CD4-positive, alpha-beta T cell (primary cell): ENCODE measurements at regions of chr18 and their contacts with region 1.

Region 1: GRCh38 chr18:77054606-77055428 is 77.8 kb downstream of the MBP start:
- DNase-seq: peak; percentile 64 to 93 (median 78)
- ATAC-seq: peak; percentile 79
- H3K4me3 ChIP-seq: peak overlapping the region; percentile 47
- H3K4me3 Mint-ChIP-seq: peak overlapping the region; percentile 61
- H3K27ac ChIP-seq: peak overlapping the region; percentile 90 to 92
- H3K27ac Mint-ChIP-seq: peak overlapping the region; percentile 89
- H3K4me1 ChIP-seq: peaks cover 81% of the 10 kb centered on the region
- H3K4me1 Mint-ChIP-seq: peaks cover 69% of the 10 kb centered on the region
- H3K27me3 ChIP-seq: no peaks in the 10 kb centered on the region
- H3K27me3 Mint-ChIP-seq: no peaks in the 10 kb centered on the region
- CTCF ChIP-seq: peak; percentile 79

Region 2: DNA sequence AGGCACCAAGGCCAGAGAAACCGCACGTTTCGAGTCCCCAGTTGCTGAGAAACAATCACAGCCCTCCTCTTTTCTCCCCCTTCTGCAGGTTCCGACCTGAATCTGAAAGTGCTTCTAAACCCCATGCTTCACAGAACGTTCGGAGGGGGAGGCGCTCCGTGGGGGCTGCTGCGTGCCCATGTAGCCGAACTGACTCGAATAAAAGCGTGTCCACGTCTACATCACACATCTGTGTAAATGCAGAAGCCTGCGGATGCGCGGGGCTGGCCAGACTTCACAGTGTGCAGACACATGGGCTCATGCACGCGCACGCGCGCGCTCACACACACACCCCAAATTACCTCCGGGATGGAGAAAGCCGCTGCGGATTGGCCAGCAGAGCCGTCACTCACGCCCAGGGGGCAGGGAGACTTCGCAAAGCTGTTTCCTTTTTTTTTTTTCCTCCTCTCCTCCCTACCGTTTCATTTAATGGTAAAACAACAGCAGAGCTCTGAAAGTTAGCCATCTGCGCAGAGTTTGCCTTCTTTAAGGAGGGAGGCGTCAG is 562.1 kb before region 1 on chr18:
- CTCF ChIA-PET with region 1: no interaction called
- POLR2A ChIA-PET with region 1: no interaction called
- intact Hi-C with region 1: no loop called
- DNase-seq: peak; percentile 96 to 100 (median 98)
- ATAC-seq: peak; percentile 68
- H3K4me3 ChIP-seq: peak overlapping the region; percentile 60
- H3K4me3 Mint-ChIP-seq: peak overlapping the region; percentile 95
- H3K27ac ChIP-seq: peak overlapping the region in 1 of 2 donors; percentile 37
- H3K27ac Mint-ChIP-seq: peak overlapping the region; percentile 82
- H3K4me1 ChIP-seq: peaks cover 36% of the 10 kb centered on the region
- H3K4me1 Mint-ChIP-seq: peaks cover 65% of the 10 kb centered on the region
- H3K27me3 ChIP-seq: peaks cover 13 to 24% of the 10 kb centered on the region in 2 experiments
- H3K27me3 Mint-ChIP-seq: peaks cover 82% of the 10 kb centered on the region
- CTCF ChIP-seq: no peak

Region 3: GRCh38 chr18:76765649-76766048 is 289.2 kb before region 1 on chr18:
- CTCF ChIA-PET with region 1: no interaction called
- POLR2A ChIA-PET with region 1: no interaction called
- intact Hi-C with region 1: no loop called
- DNase-seq: no peak
- ATAC-seq: no peak
- H3K4me3 ChIP-seq: no peak overlapping the region
- H3K4me3 Mint-ChIP-seq: no peak overlapping the region
- H3K27ac ChIP-seq: no peak overlapping the region
- H3K27ac Mint-ChIP-seq: no peak overlapping the region
- H3K4me1 ChIP-seq: peaks cover 13% of the 10 kb centered on the region
- H3K4me1 Mint-ChIP-seq: peaks cover 19% of the 10 kb centered on the region
- H3K27me3 ChIP-seq: peaks cover 0 to 4% of the 10 kb centered on the region in 2 experiments
- H3K27me3 Mint-ChIP-seq: peaks cover 5% of the 10 kb centered on the region
- CTCF ChIP-seq: no peak

Region 4: GRCh38 chr18:76822510-76823160 is 232.2 kb before region 1 on chr18 and contains the start of gene ZNF236:
- CTCF ChIA-PET with region 1: no interaction called
- POLR2A ChIA-PET with region 1: no interaction called
- intact Hi-C with region 1: loop called in 1 of 2 experiments (anchors 10 kb)
- DNase-seq: peak; percentile 39 to 88 (median 62)
- ATAC-seq: peak; percentile 43
- H3K4me3 ChIP-seq: peak within 1 kb of the TSS; percentile 97
- H3K4me3 Mint-ChIP-seq: peak within 1 kb of the TSS; percentile 96
- H3K27ac ChIP-seq: peak within 1 kb of the TSS; percentile 90 to 91
- H3K27ac Mint-ChIP-seq: peak within 1 kb of the TSS; percentile 96
- H3K4me1 ChIP-seq: peaks cover 47% of the 10 kb centered on the region
- H3K4me1 Mint-ChIP-seq: peaks cover 62% of the 10 kb centered on the region
- H3K27me3 ChIP-seq: no peaks in the 10 kb centered on the region
- H3K27me3 Mint-ChIP-seq: no peaks in the 10 kb centered on the region
- CTCF ChIP-seq: no peak
- total RNA-seq, gene ZNF236: 25.7 to 27.9 TPM

Region 5: DNA sequence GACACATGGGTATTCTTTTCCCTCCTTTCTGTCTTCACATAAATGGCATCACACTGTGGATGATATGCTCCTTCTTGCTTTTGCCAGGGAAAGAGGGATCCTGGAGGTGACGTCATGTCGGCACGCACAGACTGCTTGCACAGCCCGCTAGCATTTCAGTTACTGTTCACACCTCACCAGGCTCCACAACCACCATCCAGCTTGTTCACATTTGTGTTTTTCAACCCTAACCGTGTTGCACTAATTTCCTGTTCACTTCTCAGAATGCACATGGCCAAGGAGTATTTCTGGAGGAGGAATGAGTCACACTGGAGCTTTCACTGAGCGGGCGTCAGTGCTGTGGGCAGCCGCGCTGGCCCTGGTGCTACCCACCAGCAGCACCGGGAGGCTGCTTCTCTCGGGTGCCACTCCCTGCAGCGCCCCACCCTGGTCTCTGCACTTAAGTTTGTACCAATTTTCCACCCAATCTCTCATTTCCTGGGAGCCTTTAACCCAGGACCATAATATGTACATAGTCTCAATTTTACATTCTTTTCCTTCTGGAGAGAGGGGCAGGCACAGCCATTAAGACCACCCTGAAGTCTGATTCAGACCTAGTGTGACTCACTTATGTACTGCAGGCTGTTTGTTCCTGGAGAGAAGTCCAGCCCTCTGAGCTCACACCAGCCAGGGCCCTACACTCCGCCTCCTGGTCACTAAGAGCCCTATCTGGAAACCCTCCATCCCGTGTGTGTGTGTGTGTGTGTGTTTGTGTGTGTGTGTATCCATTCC is 12.7 kb after region 1 on chr18:
- CTCF ChIA-PET with region 1: interaction called, 11 read pairs
- POLR2A ChIA-PET with region 1: interaction called, 24 read pairs
- intact Hi-C with region 1: loop called in 1 of 2 experiments (anchors 1 kb)
- DNase-seq: peak in 12 of 14 experiments; percentile 52 to 87 (median 62)
- ATAC-seq: peak; percentile 18
- H3K4me3 ChIP-seq: peak overlapping the region; percentile 1
- H3K4me3 Mint-ChIP-seq: peak overlapping the region; percentile 84
- H3K27ac ChIP-seq: peak overlapping the region; percentile 56 to 81
- H3K27ac Mint-ChIP-seq: peak overlapping the region; percentile 98
- H3K4me1 ChIP-seq: peaks cover 96% of the 10 kb centered on the region
- H3K4me1 Mint-ChIP-seq: peaks cover 100% of the 10 kb centered on the region
- H3K27me3 ChIP-seq: no peaks in the 10 kb centered on the region
- H3K27me3 Mint-ChIP-seq: no peaks in the 10 kb centered on the region
- CTCF ChIP-seq: no peak

Region 6: DNA sequence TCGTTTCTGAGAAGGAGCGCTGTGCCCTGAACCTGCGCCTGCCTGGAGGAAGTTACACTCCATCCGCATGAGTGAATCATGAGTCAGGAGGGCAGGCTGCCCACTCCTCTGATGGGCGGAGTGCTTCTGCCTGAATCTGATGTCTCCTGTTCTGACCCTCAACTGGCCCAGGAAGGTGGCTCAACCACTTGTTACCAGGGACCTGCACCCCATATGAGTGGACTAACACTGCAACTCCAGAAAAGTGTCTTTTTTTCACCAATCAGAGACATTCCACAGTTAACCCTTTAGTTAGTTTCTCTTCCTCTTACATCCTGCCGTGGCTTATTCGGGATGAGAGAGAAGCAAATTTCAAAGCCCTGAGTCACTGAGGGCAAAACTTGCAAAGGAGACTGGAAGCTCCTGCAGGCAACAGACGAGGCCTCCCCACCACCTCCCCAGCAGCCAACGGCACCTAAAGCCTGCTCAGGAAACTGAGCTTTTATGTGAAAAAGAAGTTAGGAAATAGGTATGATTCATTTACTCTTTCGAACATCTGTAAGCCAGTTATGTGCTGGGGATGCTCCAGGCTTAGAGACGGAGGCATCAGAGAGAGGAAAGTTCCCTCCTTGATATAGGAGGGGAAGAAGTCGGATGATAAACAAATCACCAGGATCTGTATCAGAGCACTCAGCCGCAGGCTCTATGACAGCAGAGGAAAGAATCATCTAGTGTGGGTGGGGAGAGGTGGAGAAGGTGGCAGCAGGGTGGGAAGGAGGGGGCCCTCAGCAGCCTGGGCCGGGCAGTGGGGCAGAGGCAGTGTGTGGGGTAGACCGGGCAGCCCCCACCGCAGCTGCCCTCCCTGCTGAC is 46.8 kb after region 1 on chr18:
- CTCF ChIA-PET with region 1: interaction called, 5 read pairs
- POLR2A ChIA-PET with region 1: interaction called, 13 read pairs
- intact Hi-C with region 1: no loop called
- DNase-seq: peak in 6 of 14 experiments; percentile 29 to 77 (median 64)
- ATAC-seq: peak; percentile 15
- H3K4me3 ChIP-seq: peak overlapping the region; percentile 25
- H3K4me3 Mint-ChIP-seq: peak overlapping the region; percentile 77
- H3K27ac ChIP-seq: peak overlapping the region; percentile 74 to 89
- H3K27ac Mint-ChIP-seq: peak overlapping the region; percentile 97
- H3K4me1 ChIP-seq: peaks cover 95% of the 10 kb centered on the region
- H3K4me1 Mint-ChIP-seq: peaks cover 96% of the 10 kb centered on the region
- H3K27me3 ChIP-seq: no peaks in the 10 kb centered on the region
- H3K27me3 Mint-ChIP-seq: no peaks in the 10 kb centered on the region
- CTCF ChIP-seq: no peak

Region 7: GRCh38 chr18:77207540-77207939 is 152.7 kb after region 1 on chr18:
- CTCF ChIA-PET with region 1: interaction called, 3 read pairs
- POLR2A ChIA-PET with region 1: interaction called, 3 read pairs
- intact Hi-C with region 1: loop called in 1 of 2 experiments (anchors 5 kb)
- DNase-seq: peak; percentile 19 to 84 (median 54)
- ATAC-seq: peak; percentile 97
- H3K4me3 ChIP-seq: no peak overlapping the region
- H3K4me3 Mint-ChIP-seq: peak overlapping the region; percentile 92
- H3K27ac ChIP-seq: no peak overlapping the region
- H3K27ac Mint-ChIP-seq: peak overlapping the region; percentile 78
- H3K4me1 ChIP-seq: peaks cover 33% of the 10 kb centered on the region
- H3K4me1 Mint-ChIP-seq: peaks cover 51% of the 10 kb centered on the region
- H3K27me3 ChIP-seq: no peaks in the 10 kb centered on the region
- H3K27me3 Mint-ChIP-seq: no peaks in the 10 kb centered on the region
- CTCF ChIP-seq: peak; percentile 76